ENCODE measurements at regions of chr9 and their contacts with region 1.

Region 1: GRCh38 chr9:129962889-129963703 is 79.9 kb downstream of the FNBP1 start:
- DNase-seq: no peak
- ATAC-seq: peak; percentile 84

Region 2: GRCh38 chr9:129720181-129720864 is 242.8 kb before region 1 on chr9:
- intact Hi-C with region 1: no loop called
- DNase-seq: no peak
- ATAC-seq: no peak

Region 3: DNA sequence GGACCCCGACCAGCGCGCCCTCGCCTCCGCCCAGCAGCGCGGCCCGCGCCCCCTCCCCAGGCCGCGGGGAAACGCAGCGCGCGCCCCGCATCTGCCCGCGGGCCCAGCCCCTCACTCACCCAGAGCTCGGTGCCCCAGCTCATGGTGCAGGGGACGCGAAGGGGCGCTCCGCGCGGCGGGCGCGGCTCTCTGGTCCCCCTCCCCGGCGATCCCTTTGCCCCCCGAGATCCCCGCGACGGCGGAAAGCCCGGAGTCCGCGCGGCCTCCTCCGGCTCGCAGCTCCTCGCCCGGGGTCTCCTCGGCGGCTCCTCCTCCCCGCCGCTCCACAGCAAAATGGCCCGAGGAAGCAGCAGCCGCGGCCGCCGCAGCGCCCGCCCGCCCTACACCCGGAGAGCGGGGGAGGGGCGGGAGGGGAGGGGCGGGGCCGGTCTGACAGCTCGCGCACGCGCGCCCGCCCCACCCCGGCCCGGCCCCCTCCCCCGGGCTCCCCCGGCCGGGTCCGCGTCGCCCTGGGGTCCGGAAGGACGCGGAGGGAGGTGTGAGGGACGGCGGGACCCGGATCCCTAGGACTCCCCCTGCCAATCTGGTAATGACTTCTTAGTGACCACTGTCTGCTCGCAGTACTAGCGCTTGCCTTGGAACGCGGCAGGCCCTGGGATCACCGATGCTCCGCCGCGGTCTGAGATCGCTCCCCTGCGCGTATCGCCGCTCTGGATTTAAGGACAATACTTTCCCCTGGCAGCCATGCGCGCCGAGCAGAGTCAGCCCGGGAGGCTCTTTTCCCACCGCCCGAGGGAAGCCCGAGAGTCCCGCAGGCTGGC is 79.9 kb after region 1 on chr9 and contains the start of gene FNBP1:
- intact Hi-C with region 1: loop called (anchors 10 kb)
- DNase-seq: peak; percentile 90
- ATAC-seq: peak; percentile 97
- total RNA-seq, gene FNBP1: 21.5 TPM